Activated T-helper 1 cell treated with anti-CD3 and anti-CD28 coated beads, Interleukin-12 subunit alpha, Interleukin-12 subunit beta, Interleukin-2, Interleukin-4 antibody, amounts not matched to agents 30 ng/mL and 10 ng/mL and 1 ng/mL, durations not matched to agents 14 hours and 24 hours and 36 hours (primary cell): ENCODE measurements at regions of chr11 and their contacts with region 1.

Region 1: GRCh38 chr11:56474729-56475235 is 1.6 kb upstream of the OR5M3 start:
- DNase-seq: no peak
- H3K4me3 Mint-ChIP-seq: no peak overlapping the region
- H3K27ac Mint-ChIP-seq: no peak overlapping the region
- H3K4me1 Mint-ChIP-seq: no peaks in the 10 kb centered on the region
- H3K27me3 Mint-ChIP-seq: no peaks in the 10 kb centered on the region

Region 2: GRCh38 chr11:56453521-56453920 is 21.3 kb before region 1 on chr11:
- intact Hi-C with region 1: loop called (anchors 1 kb)
- DNase-seq: no peak
- H3K4me3 Mint-ChIP-seq: no peak overlapping the region
- H3K27ac Mint-ChIP-seq: no peak overlapping the region
- H3K4me1 Mint-ChIP-seq: no peaks in the 10 kb centered on the region
- H3K27me3 Mint-ChIP-seq: no peaks in the 10 kb centered on the region